HEK293 (cell line): ENCODE measurements at regions of chr15 and their contacts with region 1.

Region 1: DNA sequence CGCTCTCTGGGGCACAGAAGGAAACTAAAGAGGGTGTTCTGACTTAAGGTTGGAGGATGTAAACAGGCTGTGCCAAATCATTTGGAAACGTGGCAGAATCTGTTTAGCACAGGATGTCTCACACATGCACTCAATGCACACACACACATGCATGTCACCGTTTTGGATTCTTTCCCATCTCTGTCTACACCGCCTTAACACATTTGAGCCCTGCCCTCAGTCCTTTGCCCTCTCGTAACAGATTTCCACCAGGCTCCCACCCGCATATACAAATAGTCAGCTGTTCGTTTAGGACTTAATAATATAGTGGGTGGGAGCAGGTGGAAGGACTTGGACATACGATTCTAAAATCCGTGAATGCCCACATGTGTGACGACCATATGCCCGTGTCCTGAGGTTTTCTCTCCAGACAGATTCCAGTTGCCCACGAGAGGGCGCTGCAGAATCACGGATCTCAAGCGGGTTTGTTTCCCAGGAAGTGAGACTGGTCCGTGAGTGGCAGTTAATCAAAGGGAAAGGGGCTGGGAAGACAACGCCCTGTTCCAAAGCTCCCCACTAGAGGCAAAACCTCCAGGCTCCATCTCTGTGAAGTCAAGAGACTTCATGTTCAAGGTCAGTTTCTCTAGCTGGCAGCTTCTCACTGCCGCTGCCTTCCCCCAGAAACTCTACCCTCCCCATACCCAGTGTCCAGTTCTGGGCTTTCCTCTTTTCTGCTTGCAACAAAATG is 44.5 kb downstream of the NOX5 start:
- H3K4me3 ChIP-seq: no peak overlapping the region
- H3K27ac ChIP-seq: no peak overlapping the region
- H3K4me1 ChIP-seq: peaks cover 4% of the 10 kb centered on the region
- CTCF ChIP-seq: peak; percentile 99

Region 2: GRCh38 chr15:69045808-69046207 is 13.2 kb before region 1 on chr15:
- CTCF ChIA-PET with region 1: interaction called, 32 read pairs
- POLR2A ChIA-PET with region 1: no interaction called
- H3K4me3 ChIP-seq: no peak overlapping the region
- H3K27ac ChIP-seq: no peak overlapping the region
- H3K4me1 ChIP-seq: peaks cover 3% of the 10 kb centered on the region; the same call in 1 of the 2 replicates
- CTCF ChIP-seq: no peak

Region 3: DNA sequence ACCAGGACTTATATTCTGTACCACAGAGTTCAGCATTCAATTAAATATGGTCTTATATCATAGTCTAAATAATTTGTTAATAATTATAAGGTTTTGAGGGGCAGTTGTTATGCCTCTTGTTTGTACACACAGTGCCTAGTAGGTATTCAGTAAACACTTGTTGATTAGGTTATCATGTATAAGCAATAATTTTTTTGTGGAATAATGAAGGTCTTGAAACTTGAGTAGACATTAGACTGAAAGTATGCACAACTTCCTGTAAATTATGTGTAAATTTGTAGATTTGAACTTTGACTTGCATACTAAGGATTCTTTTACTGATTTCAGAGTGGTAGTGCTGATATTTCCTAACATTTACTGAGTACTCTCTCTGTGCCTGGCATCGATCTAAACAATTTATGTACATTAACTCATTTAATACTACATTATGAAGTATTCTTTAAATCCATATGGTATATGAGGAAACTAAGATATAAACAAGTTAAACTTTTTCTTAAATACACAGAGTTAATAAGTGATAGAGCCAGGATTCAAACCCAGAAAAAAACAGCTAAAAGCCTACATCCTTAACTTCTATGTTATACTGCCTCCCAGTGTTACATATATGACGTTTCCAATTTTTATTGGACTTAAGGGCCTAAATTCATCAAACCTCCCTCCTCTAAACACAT is 166.5 kb after region 1 on chr15:
- CTCF ChIA-PET with region 1: interaction called, 61 read pairs
- POLR2A ChIA-PET with region 1: no interaction called
- H3K4me3 ChIP-seq: no peak overlapping the region
- H3K27ac ChIP-seq: no peak overlapping the region
- H3K4me1 ChIP-seq: no peaks in the 10 kb centered on the region
- CTCF ChIP-seq: no peak

Region 4: DNA sequence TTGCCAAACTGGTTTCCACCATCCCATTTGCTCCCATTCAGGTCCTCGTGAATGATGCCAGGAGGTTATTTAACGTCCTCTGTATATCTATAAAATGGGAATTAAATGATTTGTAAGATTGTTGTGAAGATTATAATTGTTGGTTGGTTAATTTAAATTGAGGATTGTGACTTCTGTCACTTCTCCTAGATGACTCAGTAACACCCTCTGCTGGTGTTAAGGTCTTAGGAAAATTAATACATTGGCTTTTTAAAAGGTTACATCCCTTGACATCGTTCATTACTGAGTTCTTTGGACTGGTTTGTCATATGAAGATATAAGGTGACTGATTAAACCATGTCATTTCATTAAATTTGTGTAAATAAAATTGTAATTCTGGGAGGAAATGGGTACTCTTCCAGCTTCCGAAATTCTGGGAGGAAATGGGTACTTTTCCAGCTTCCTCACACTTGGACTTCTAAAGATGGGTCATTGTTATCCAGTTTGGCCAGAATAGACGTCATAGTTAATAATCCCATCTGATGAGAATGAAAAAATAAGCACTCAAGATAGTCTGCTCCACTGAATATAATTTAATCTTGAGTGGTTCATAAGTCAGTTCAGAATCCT is 206.5 kb after region 1 on chr15:
- CTCF ChIA-PET with region 1: interaction called, 53 read pairs
- POLR2A ChIA-PET with region 1: no interaction called
- H3K4me3 ChIP-seq: no peak overlapping the region
- H3K27ac ChIP-seq: no peak overlapping the region
- H3K4me1 ChIP-seq: no peaks in the 10 kb centered on the region
- CTCF ChIP-seq: peak; percentile 58; the same call in 1 of the 2 replicates

Region 5: GRCh38 chr15:69280783-69281182 is 221.8 kb after region 1 on chr15:
- CTCF ChIA-PET with region 1: interaction called, 12 read pairs
- POLR2A ChIA-PET with region 1: no interaction called
- H3K4me3 ChIP-seq: no peak overlapping the region
- H3K27ac ChIP-seq: no peak overlapping the region
- H3K4me1 ChIP-seq: peaks cover under 1% of the 10 kb centered on the region; the same call in 1 of the 2 replicates
- CTCF ChIP-seq: no peak

Region 6: DNA sequence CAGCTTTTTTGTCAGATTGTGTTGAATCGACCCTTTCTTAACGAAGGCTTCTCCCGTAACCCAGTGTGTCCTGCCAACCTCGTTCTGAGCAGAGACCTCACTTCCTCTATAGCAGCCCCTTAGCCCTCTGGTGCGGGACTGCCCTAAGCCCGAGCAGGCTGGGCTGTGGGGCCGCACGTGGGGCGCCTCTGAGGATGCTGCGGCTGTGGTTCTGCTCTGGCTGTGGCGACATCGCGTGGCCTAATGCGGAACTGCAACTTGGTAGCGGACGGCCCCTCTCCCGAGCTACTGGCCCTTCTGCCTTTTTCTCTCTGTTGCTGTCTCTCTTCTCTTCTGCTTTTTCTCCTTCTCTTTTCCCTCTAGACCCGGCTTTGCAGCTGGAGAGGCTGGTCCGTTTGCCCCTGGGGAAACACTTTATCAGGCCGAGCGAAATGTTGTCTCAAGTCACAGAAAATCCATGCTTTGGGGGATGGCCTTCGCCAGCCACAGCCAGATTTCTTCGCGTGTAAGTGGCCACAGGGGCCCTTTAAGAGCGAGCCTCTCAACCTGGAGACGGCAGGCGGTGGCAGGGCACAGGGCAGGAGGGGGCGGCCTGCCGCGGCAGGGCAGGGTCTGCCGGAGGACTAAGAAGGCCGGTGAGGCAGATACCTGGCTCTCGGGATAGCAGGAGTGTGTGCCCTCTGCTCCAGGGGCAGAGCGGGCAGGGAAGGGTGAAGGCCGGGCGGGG is 335.7 kb after region 1 on chr15:
- CTCF ChIA-PET with region 1: interaction called, 51 read pairs
- POLR2A ChIA-PET with region 1: no interaction called
- H3K4me3 ChIP-seq: no peak overlapping the region
- H3K27ac ChIP-seq: no peak overlapping the region
- H3K4me1 ChIP-seq: no peaks in the 10 kb centered on the region; the same call in 1 of the 2 replicates
- CTCF ChIP-seq: peak; percentile 97

Region 7: DNA sequence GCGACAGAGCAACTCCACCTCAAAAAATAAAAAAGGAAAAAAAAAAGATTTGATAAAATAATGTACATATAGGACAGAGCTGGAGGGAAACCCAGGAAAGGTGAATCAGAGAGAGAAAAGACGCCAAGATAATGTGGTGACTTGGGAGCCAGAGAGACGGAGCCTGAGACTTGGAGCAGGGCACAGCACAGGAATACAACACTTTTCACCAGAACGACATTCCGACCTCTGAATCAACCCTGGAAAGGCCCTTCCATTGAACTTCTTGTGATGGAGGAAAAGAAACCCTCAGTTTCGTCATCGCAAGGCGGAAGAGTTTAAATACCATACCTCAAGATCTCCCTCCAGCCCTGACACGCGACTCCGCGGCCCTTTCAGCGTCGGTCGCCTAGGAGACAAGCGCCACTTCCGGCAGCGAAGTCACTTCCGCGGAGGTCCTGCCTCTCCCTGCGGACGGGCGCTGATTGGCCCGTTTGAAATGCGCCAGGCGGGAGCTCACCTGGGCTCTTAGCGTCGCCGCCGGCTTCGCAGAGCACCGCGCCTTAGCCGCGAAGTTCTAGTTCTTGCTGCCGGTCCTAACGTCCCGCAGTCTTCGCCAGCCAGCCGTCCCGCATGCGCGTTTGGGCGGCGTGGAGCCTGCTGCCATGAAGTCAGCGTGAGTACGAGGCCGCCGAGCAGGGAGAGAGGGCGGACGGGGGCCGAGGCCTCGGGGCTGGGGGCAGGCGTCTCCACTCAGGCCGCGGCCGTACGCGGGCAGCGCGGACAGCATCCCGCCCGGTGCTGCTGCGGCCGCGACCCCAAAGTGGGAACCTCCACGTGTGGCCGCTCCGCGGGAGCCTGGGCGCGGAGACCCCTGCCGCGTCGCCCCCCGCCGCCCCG is 355.1 kb after region 1 on chr15 and contains the start of gene KIF23:
- CTCF ChIA-PET with region 1: interaction called, 11 read pairs
- POLR2A ChIA-PET with region 1: no interaction called
- H3K4me3 ChIP-seq: peak within 1 kb of the TSS; percentile 93
- H3K27ac ChIP-seq: peak within 1 kb of the TSS; percentile 98
- H3K4me1 ChIP-seq: peaks cover 12% of the 10 kb centered on the region
- CTCF ChIP-seq: 0 out of 2 replicates have a peak, but pooled peaks have one; percentile 14